ENCODE measurements at regions of chr1 and their contacts with region 1.

Region 1: DNA sequence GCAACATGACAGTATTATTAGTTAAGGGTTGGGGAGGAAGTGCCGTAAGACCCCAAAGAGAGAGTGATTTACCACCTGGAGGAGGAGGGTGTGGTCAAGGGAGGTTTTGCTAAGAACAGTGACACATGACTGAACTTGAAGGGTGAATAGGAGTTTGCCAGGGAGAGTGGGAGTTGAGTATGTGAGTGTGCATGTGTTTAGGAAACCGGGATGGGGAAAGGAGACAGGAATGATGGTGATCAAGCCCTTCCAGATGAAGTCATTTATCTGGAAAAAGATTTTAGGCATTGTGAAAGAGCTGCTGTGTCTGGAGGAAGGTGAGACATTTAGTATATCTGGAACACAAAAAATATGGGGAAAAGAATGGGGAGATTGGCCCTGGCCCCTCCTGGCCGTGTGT is 28.1 kb upstream of the IL10 start:
- DNase-seq: no peak
- ATAC-seq: no peak

Region 2: DNA sequence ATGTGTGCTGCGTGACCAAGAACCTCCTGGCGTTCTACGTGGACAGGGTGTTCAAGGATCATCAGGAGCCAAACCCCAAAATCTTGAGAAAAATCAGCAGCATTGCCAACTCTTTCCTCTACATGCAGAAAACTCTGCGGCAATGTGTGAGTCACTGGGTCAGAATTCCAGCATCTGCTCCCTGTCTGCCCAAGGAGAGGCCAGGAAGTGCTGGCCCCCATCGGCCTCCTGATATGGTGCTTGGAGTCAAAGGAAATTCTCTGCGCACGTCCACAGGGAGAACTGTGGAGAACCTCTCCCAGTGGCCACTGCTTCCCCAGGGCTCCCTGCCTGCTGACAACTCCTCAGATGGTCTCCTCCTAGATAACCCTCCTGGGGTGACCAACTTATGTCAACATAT is 39.4 kb after region 1 on chr1:
- intact Hi-C with region 1: loop called (anchors 1 kb)
- DNase-seq: no peak
- ATAC-seq: no peak

Measured in sciatic nerve (tissue), 2 donors.